ENCODE measurements at regions of chr13 and their contacts with region 1.

Region 1: GRCh38 chr13:52968074-52968700 is 60.4 kb upstream of the OLFM4 start:
- DNase-seq: peak; percentile 74
- H3K4me3 ChIP-seq: no peak overlapping the region
- H3K27ac ChIP-seq: no peak overlapping the region
- H3K4me1 ChIP-seq: no peaks in the 10 kb centered on the region
- CTCF ChIP-seq: peak; percentile 93

Region 2: GRCh38 chr13:52896827-52897659 is 71.1 kb before region 1 on chr13:
- CTCF ChIA-PET with region 1: interaction called, 5 read pairs
- POLR2A ChIA-PET with region 1: no interaction called
- intact Hi-C with region 1: loop called (anchors 2 kb)
- DNase-seq: peak; percentile 24
- H3K4me3 ChIP-seq: no peak overlapping the region
- H3K27ac ChIP-seq: no peak overlapping the region
- H3K4me1 ChIP-seq: no peaks in the 10 kb centered on the region
- CTCF ChIP-seq: peak; percentile 70